ENCODE measurements at regions of chr13 and their contacts with region 1.

Region 1: DNA sequence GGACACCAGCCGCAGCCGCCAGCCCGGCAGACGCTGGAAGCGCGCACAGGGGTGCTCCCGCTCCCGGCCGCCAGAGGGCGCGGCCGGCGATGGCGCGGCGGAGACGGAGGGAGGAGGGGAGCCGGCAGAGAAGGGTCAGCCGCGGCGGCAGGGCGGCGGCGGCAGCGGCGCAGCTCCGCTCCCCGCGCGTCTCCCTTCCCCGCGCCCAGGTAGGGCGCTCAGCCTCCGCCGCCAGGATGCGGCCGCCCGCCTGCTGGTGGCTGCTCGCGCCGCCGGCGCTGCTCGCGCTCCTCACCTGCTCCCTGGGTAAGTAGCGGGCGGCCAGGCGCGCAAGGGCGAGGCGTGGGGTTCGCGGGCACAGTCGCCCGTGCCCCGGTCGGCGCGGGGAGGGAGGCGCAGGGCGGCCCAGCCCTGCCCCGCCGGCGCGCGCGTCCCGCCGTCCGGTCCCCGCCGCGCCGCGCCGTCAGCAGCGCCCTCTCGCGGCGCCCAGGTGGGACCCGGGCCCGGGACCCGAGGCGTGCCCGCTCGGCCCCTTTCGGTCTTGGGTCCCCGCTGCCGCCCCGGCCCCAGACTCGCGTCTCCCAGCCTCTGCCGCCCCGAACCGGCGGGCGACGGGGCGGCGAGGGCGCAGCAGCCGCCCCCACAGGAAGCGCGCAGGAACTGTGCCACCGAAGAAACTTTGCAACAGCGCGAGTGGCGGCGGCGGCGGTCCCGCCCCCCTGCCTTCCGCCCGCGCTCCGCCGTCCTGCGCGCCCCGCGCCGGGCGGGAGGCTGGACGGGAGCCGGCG is at the start of gene B3GLCT:
- DNase-seq: peak; percentile 43 to 68
- ATAC-seq: peak; percentile 87 to 93
- H3K4me3 ChIP-seq: peak within 1 kb of the TSS; percentile 62 to 77 (median 68)
- H3K27ac ChIP-seq: peak within 1 kb of the TSS; percentile 81 to 94 (median 91)
- H3K4me1 ChIP-seq: peaks cover 12 to 13% of the 10 kb centered on the region in 2 donors
- H3K27me3 ChIP-seq: no peaks in the 10 kb centered on the region
- CTCF ChIP-seq: peak; percentile 70 to 99 (median 88)
- POLR2A ChIP-seq: peak; percentile 17 to 42
- total RNA-seq, gene B3GLCT: 2.4 to 4.8 (median 3.6) TPM

Region 2: GRCh38 chr13:30963791-30964190 is 236.3 kb before region 1 on chr13:
- in situ Hi-C with region 1: no loop called
- intact Hi-C with region 1: no loop called
- DNase-seq: no peak
- ATAC-seq: no peak
- H3K4me3 ChIP-seq: no peak overlapping the region
- H3K27ac ChIP-seq: no peak overlapping the region
- H3K4me1 ChIP-seq: no peaks in the 10 kb centered on the region
- H3K27me3 ChIP-seq: no peaks in the 10 kb centered on the region
- CTCF ChIP-seq: no peak
- POLR2A ChIP-seq: no peak

Region 3: GRCh38 chr13:31161828-31162590 is 38.0 kb before region 1 on chr13 and contains the start of gene HSPH1:
- in situ Hi-C with region 1: no loop called
- intact Hi-C with region 1: loop called (anchors 1 kb)
- DNase-seq: peak; percentile 97 to 98
- ATAC-seq: peak; percentile 95 to 96
- H3K4me3 ChIP-seq: peak within 1 kb of the TSS; percentile 82 to 95 (median 93)
- H3K27ac ChIP-seq: peak within 1 kb of the TSS; percentile 84 to 98 (median 96)
- H3K4me1 ChIP-seq: peaks cover 31 to 42% of the 10 kb centered on the region in 2 donors
- H3K27me3 ChIP-seq: no peaks in the 10 kb centered on the region
- CTCF ChIP-seq: peak in 1 of 5 experiments; percentile 28
- POLR2A ChIP-seq: peak; percentile 74 to 93
- total RNA-seq, gene HSPH1: 23.0 to 57.7 (median 30.6) TPM

Region 4: GRCh38 chr13:31175847-31176532 is 24.1 kb before region 1 on chr13:
- in situ Hi-C with region 1: no loop called
- intact Hi-C with region 1: loop called (anchors 1 kb)
- DNase-seq: peak; percentile 26 to 50
- ATAC-seq: peak; percentile 93 to 96
- H3K4me3 ChIP-seq: no peak overlapping the region
- H3K27ac ChIP-seq: peak overlapping the region; percentile 43 to 80 (median 68)
- H3K4me1 ChIP-seq: peaks cover 5 to 16% of the 10 kb centered on the region in 2 donors
- H3K27me3 ChIP-seq: no peaks in the 10 kb centered on the region
- CTCF ChIP-seq: peak in 1 of 5 experiments; percentile 19
- POLR2A ChIP-seq: no peak

Region 5: DNA sequence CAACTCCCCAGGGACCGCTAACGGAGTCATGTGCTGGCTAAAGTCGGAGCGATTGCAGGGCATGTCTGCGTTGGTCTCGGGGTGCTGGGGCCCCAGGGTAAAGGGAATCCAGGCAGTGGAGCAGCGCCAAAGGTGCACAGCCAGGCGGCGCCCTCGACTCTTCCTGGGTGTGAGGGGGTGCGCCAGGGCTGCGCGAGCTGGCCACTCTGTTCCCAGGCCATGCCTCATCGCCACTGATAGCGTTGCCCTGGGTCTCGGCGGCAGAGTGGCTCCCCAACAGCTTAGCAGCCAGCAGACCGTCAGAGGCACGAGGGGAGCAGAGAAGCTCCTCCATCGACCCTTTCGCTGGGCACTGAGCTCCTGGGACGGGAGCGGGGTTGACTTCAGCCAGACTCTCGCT is 152.4 kb after region 1 on chr13:
- in situ Hi-C with region 1: no loop called
- intact Hi-C with region 1: no loop called
- DNase-seq: no peak
- ATAC-seq: no peak
- H3K4me3 ChIP-seq: no peak overlapping the region
- H3K27ac ChIP-seq: no peak overlapping the region
- H3K4me1 ChIP-seq: no peaks in the 10 kb centered on the region
- H3K27me3 ChIP-seq: no peaks in the 10 kb centered on the region
- CTCF ChIP-seq: no peak
- POLR2A ChIP-seq: no peak

Region 6: GRCh38 chr13:31896427-31896826 is 696.4 kb after region 1 on chr13:
- in situ Hi-C with region 1: no loop called
- intact Hi-C with region 1: no loop called
- DNase-seq: peak in 1 of 2 donors; percentile 58
- ATAC-seq: peak; percentile 91 to 92
- H3K4me3 ChIP-seq: no peak overlapping the region
- H3K27ac ChIP-seq: peak overlapping the region; percentile 19 to 52 (median 24)
- H3K4me1 ChIP-seq: peaks cover 6 to 25% of the 10 kb centered on the region in 2 donors
- H3K27me3 ChIP-seq: no peaks in the 10 kb centered on the region
- CTCF ChIP-seq: no peak
- POLR2A ChIP-seq: no peak